Breast epithelium (tissue), 4 donors: ENCODE measurements at regions of chr14 and their contacts with region 1.

Region 1: GRCh38 chr14:35034440-35034833 is 11.6 kb upstream of the FAM177A1 start:
- DNase-seq: no peak
- H3K4me3 ChIP-seq: no peak overlapping the region
- H3K27ac ChIP-seq: no peak overlapping the region
- H3K4me1 ChIP-seq: no peaks in the 10 kb centered on the region
- H3K27me3 ChIP-seq: no peaks in the 10 kb centered on the region
- CTCF ChIP-seq: no peak
- POLR2A ChIP-seq: no peak

Region 2: DNA sequence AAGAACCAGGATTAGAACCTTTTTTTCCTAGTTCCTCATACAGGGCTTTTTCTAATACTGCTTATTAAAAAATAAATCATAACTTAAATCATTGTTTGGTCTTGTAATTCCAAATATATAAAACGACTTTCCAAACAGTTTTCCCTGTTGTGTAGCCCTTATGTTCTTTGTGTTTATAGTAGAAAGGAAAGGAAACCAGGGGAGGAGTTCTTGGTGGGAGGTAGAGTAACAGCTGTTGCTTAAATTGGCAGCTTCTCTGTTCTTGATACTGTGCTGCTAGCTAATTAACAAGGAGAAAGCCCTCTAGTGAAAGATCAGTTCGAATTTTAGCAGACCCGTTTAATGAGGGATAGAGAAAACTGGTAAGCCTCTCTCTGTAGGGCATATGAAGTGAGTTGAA is 36.7 kb before region 1 on chr14:
- intact Hi-C with region 1: loop called (anchors 2 kb)
- DNase-seq: no peak
- H3K4me3 ChIP-seq: no peak overlapping the region
- H3K27ac ChIP-seq: no peak overlapping the region
- H3K4me1 ChIP-seq: no peaks in the 10 kb centered on the region
- H3K27me3 ChIP-seq: no peaks in the 10 kb centered on the region
- CTCF ChIP-seq: no peak
- POLR2A ChIP-seq: no peak

Region 3: GRCh38 chr14:35052637-35053036 is 18.2 kb after region 1 on chr14:
- intact Hi-C with region 1: no loop called
- DNase-seq: no peak
- H3K4me3 ChIP-seq: no peak overlapping the region
- H3K27ac ChIP-seq: no peak overlapping the region
- H3K4me1 ChIP-seq: no peaks in the 10 kb centered on the region
- H3K27me3 ChIP-seq: no peaks in the 10 kb centered on the region
- CTCF ChIP-seq: no peak
- POLR2A ChIP-seq: no peak

Region 4: DNA sequence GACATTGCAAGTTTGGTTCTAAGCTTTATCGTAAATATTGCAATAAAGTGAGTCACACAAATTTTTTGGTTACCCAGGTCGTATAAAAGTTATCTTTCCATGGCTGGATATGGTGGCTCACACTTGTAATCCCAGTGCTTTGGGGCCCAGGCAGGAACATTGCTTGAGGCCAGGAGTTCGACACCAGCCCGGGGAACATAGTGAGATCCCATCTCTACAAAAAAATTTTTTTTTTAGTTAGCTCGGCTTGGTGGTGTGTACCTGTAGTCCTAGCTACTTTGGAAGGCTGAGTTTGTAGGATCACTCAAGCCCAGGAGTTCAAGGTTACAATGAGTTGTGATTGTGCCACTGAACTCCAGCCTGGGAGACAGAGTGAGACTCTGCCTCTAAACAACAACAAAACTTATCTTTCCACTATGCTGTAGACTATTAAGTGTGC is 112.3 kb after region 1 on chr14:
- intact Hi-C with region 1: no loop called
- DNase-seq: no peak
- H3K4me3 ChIP-seq: no peak overlapping the region
- H3K27ac ChIP-seq: no peak overlapping the region
- H3K4me1 ChIP-seq: no peaks in the 10 kb centered on the region
- H3K27me3 ChIP-seq: no peaks in the 10 kb centered on the region
- CTCF ChIP-seq: no peak
- POLR2A ChIP-seq: no peak

Region 5: GRCh38 chr14:35301735-35302528 is 267.5 kb after region 1 on chr14:
- intact Hi-C with region 1: no loop called
- DNase-seq: no peak
- H3K4me3 ChIP-seq: no peak overlapping the region
- H3K27ac ChIP-seq: no peak overlapping the region
- H3K4me1 ChIP-seq: peaks cover 3 to 14% of the 10 kb centered on the region in 2 donors
- H3K27me3 ChIP-seq: no peaks in the 10 kb centered on the region
- CTCF ChIP-seq: no peak
- POLR2A ChIP-seq: no peak